ENCODE measurements at regions of chr13 and their contacts with region 1.

Region 1: DNA sequence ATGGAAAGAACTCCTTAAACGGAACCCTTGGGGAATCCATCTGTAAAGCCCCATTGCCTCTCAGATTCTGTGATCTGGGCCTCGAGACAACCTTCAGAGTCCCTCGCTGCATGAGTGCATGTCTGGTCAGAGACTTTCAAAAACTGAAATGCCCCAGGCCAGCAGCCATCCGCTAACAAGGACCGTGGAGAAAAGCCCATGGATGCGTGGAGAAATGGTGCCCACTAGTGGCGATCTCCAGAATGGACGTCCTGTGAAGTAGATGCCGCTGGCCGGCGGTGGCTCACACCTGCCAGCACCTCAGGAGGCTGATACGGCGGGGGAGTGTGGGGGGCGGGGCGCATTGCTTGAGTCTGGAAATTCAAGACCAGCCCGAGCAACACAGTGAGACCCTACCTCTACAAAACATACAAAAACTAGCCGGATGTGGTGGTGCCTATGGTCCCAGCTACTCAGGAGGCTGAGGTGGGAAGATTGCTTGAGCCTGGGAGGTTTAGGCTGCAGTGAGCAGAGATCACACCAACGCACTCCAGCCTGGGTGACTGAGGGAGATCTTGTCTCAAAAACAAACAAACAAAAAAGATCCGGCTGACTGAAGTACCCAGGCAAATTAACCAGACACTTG is 7.9 kb upstream of the CDC16 start:
- DNase-seq: peak; percentile 94
- H3K4me3 ChIP-seq: no peak overlapping the region
- H3K27ac ChIP-seq: no peak overlapping the region
- H3K4me1 ChIP-seq: peaks cover 0 to 20% (median 6%) of the 10 kb centered on the region in 4 donors
- H3K27me3 ChIP-seq: peaks cover 0 to 39% (median 29%) of the 10 kb centered on the region in 3 donors
- CTCF ChIP-seq: peak in 6 of 7 experiments; percentile 59 to 95 (median 92)
- EP300 ChIP-seq: no peak
- POLR2A ChIP-seq: no peak

Region 2: GRCh38 chr13:113951246-113951999 is 275.4 kb before region 1 on chr13:
- intact Hi-C with region 1: loop called (anchors 5 kb)
- DNase-seq: peak; percentile 90 to 92
- H3K4me3 ChIP-seq: peak overlapping the region in 3 of 4 donors; percentile 3 to 21 (median 14)
- H3K27ac ChIP-seq: peak overlapping the region in 1 of 5 donors; percentile 41
- H3K4me1 ChIP-seq: peaks cover 10 to 28% (median 26%) of the 10 kb centered on the region in 4 donors
- H3K27me3 ChIP-seq: no peaks in the 10 kb centered on the region
- CTCF ChIP-seq: peak in 5 of 7 experiments; percentile 69 to 95 (median 86)
- EP300 ChIP-seq: no peak
- POLR2A ChIP-seq: no peak

Region 3: GRCh38 chr13:114143806-114144605 is 82.8 kb before region 1 on chr13:
- intact Hi-C with region 1: no loop called
- DNase-seq: no peak
- H3K4me3 ChIP-seq: no peak overlapping the region
- H3K27ac ChIP-seq: no peak overlapping the region
- H3K4me1 ChIP-seq: peaks cover 4 to 22% (median 19%) of the 10 kb centered on the region in 4 donors
- H3K27me3 ChIP-seq: no peaks in the 10 kb centered on the region
- CTCF ChIP-seq: no peak
- EP300 ChIP-seq: no peak
- POLR2A ChIP-seq: no peak

Measured in stomach (tissue), 19 donors.